Caki2 (cell line): ENCODE measurements at regions of chr4 and their contacts with region 1.

Region 1: GRCh38 chr4:87949961-87950360 is 25.6 kb upstream of the SPP1 start:
- DNase-seq: peak; percentile 97

Region 2: GRCh38 chr4:87882321-87882720 is 67.6 kb before region 1 on chr4:
- in situ Hi-C with region 1: loop called (anchors 5 kb)
- DNase-seq: no peak

Region 3: DNA sequence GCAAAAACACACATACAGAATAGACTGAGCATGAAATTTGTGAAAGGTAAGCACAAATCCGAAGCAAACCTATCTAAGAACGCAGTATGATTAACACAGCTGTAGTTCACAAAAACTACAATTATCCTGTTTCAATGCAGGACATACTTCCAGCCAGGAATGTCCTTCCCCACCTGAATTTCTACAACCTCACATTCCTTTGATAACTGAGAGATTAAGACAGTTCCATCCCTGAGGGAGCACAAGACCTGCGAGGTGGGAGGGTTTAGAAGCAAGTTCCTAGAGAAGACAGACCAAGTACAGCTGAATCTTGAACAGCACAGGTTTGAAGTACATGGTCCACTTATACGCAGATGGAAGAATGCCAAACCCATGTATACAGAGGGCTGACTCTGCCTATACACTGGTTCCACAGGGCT is 197.8 kb after region 1 on chr4:
- in situ Hi-C with region 1: no loop called
- DNase-seq: no peak

Region 4: GRCh38 chr4:88230969-88231771 is 281.2 kb after region 1 on chr4:
- in situ Hi-C with region 1: no loop called
- DNase-seq: no peak